Right cardiac atrium (tissue), 5 donors: ENCODE measurements at regions of chr2 and their contacts with region 1.

Region 1: DNA sequence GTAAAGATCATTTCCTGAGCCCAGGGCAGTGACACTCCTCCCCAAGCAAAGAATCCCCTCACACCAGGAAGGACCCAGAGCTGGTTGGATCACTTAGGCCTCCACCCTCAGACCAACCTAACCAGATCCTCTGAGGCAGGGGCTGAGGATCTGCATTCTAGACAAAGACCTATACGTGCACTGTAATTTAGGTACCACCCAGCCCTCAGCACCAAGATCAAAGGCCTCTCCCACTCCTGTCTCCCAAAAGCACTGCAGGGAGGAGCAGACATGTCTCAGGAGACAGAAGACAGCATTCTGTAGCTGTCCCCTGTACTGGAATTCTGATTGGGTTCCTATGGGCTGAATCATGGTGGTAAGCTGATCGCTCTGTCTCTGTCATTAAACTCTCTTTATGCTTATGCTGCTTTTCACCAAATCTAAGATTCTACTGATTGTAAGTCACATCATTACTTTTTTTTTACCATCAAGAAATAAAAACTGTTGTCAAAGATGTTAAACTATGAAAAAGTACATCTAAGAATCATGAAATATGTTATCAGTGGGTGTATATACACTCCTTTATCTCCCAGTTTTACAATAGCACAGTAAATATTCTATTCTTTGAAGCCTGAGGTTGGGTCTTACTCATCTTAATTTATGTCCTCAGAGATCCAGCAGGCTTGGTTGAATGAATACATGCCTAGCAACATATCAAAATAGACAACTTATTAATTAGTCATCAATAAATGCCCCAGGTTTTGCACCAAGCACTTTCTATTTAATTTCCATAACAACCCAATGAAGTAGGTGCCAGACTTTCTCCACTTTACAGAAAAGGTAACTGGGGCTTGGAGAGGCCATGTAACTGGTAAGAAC is 28.3 kb downstream of the MCFD2 start:
- DNase-seq: no peak
- ATAC-seq: no peak
- H3K4me3 ChIP-seq: no peak overlapping the region
- H3K27ac ChIP-seq: no peak overlapping the region
- H3K4me1 ChIP-seq: peaks cover 3% of the 10 kb centered on the region
- H3K27me3 ChIP-seq: no peaks in the 10 kb centered on the region

Region 2: DNA sequence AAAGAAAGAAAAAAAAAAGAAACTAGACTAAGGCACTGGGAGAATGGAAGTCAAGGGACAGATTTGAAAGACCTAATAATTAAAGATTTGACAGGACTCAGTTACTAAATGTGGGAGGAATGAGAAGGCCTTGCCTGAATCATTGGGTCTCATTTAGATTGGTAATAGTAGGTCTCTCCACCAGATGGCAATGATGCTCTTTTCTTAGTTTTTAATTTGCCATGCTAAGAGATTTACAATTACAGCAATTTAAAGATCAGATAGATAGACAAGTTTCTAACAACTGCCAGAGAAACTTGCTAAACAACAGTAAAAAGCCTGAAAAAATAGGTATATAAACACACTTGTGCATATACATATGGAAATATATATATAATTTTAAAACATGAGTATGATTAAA is 254.9 kb before region 1 on chr2:
- intact Hi-C with region 1: loop called (anchors 5 kb)
- DNase-seq: no peak
- ATAC-seq: peak; percentile 41 to 56
- H3K4me3 ChIP-seq: no peak overlapping the region
- H3K27ac ChIP-seq: no peak overlapping the region
- H3K4me1 ChIP-seq: no peaks in the 10 kb centered on the region
- H3K27me3 ChIP-seq: no peaks in the 10 kb centered on the region

Region 3: GRCh38 chr2:46650556-46651001 is 236.7 kb before region 1 on chr2:
- intact Hi-C with region 1: loop called in 2 of 4 experiments (anchors 5 kb)
- DNase-seq: peak in 2 of 3 donors; percentile 62 to 77
- ATAC-seq: peak; percentile 42 to 77
- H3K4me3 ChIP-seq: no peak overlapping the region
- H3K27ac ChIP-seq: no peak overlapping the region
- H3K4me1 ChIP-seq: peaks cover 2% of the 10 kb centered on the region
- H3K27me3 ChIP-seq: no peaks in the 10 kb centered on the region

Region 4: DNA sequence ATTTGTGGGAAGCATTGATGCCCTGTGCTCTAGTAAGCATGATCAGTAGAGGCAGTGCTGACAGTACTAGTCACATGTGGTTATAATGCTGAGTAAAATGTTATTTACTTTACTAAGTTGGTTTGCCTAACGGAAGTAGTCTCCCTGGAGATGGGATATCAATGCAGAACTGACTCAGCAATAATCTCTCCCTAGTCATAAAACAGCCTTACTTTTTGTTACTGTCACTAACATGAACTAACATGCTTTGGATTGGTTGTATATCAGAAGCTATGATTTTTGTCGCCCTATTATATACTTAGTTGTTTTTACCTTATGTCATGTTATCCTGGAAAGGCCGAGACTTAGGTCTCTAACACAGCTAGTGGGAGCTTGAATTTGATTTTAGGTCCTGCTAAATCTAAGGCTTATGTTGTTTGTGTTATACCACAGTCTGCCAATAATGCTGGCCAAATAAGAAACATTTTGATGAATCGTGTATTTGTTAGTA is 138.2 kb before region 1 on chr2:
- intact Hi-C with region 1: no loop called
- DNase-seq: no peak
- ATAC-seq: peak; percentile 49 to 63
- H3K4me3 ChIP-seq: no peak overlapping the region
- H3K27ac ChIP-seq: no peak overlapping the region
- H3K4me1 ChIP-seq: peaks cover 8% of the 10 kb centered on the region
- H3K27me3 ChIP-seq: no peaks in the 10 kb centered on the region

Region 5: DNA sequence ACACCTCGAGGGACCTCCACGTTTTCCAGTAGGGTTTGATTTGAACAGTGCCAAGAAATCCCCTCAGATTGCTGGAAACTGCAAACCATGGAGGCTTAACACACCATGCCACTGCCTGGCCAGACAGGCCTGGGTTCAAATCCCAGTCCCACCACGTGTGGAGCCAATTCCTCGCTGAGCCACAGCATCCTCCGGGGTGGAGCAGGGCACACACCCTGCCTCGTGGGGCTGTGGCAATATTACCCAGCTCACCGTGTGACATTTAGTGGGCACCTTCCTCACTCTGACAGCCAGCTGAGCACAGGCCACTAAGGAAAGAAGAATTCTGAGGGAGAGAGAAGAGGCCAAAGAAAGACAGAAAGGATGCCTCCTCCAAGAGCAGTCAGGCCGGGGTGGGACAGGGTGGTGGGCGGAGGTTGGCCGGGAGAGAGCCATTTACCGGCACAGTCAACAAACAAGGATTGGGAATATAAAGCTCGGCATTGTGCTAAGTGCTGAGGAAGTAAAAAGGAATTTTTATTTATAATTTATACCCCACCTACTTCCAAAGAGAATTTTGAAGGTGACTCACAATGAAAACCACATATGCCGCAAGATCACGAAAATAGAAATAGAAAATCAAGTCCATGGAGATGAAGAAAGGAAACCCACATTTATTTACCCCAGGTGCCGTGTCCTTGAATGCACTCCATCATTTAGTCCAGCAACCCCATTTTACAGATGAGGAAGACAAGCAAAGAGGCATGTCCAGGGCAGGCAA is 83.2 kb before region 1 on chr2:
- intact Hi-C with region 1: loop called in 1 of 4 experiments (anchors 5 kb)
- DNase-seq: peak in 1 of 3 donors; percentile 42
- ATAC-seq: peak in 1 of 2 donors; percentile 13
- H3K4me3 ChIP-seq: no peak overlapping the region
- H3K27ac ChIP-seq: no peak overlapping the region
- H3K4me1 ChIP-seq: peaks cover 10% of the 10 kb centered on the region
- H3K27me3 ChIP-seq: no peaks in the 10 kb centered on the region

Region 6: GRCh38 chr2:47512581-47513083 is 625.4 kb after region 1 on chr2:
- intact Hi-C with region 1: no loop called
- DNase-seq: no peak
- ATAC-seq: no peak
- H3K4me3 ChIP-seq: no peak overlapping the region
- H3K27ac ChIP-seq: no peak overlapping the region
- H3K4me1 ChIP-seq: no peaks in the 10 kb centered on the region
- H3K27me3 ChIP-seq: no peaks in the 10 kb centered on the region